ENCODE measurements at regions of chr5 and their contacts with region 1.

Region 1: DNA sequence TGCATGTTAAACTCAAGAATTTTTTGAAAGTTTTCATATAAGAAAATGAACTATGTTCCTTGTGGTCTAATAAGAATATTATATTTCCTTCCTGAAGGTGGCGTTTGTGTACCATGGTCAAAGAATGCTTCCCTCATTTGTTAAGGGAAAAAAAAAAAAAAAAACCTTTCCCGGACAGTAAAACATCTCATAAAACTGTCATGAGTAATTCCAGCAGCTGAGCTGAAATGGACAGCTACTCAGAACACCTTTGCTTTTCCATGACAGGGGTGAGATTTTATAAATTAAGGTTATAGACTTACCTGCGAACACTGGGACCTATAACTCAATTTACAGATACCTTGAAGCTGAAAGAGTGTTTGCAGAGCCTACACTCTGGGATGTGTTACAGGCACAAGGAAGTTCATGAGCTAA is 113.2 kb upstream of the RANBP3L start:
- DNase-seq: no peak
- H3K4me3 ChIP-seq: no peak overlapping the region
- H3K27me3 ChIP-seq: peaks cover 10% of the 10 kb centered on the region
- CTCF ChIP-seq: peak; percentile 46

Region 2: GRCh38 chr5:36507332-36507952 is 92.6 kb after region 1 on chr5:
- CTCF ChIA-PET with region 1: interaction called, 143 read pairs
- POLR2A ChIA-PET with region 1: interaction called, 3 read pairs
- DNase-seq: no peak
- H3K4me3 ChIP-seq: no peak overlapping the region
- H3K27me3 ChIP-seq: peaks cover 3% of the 10 kb centered on the region
- CTCF ChIP-seq: peak; percentile 91

Region 3: DNA sequence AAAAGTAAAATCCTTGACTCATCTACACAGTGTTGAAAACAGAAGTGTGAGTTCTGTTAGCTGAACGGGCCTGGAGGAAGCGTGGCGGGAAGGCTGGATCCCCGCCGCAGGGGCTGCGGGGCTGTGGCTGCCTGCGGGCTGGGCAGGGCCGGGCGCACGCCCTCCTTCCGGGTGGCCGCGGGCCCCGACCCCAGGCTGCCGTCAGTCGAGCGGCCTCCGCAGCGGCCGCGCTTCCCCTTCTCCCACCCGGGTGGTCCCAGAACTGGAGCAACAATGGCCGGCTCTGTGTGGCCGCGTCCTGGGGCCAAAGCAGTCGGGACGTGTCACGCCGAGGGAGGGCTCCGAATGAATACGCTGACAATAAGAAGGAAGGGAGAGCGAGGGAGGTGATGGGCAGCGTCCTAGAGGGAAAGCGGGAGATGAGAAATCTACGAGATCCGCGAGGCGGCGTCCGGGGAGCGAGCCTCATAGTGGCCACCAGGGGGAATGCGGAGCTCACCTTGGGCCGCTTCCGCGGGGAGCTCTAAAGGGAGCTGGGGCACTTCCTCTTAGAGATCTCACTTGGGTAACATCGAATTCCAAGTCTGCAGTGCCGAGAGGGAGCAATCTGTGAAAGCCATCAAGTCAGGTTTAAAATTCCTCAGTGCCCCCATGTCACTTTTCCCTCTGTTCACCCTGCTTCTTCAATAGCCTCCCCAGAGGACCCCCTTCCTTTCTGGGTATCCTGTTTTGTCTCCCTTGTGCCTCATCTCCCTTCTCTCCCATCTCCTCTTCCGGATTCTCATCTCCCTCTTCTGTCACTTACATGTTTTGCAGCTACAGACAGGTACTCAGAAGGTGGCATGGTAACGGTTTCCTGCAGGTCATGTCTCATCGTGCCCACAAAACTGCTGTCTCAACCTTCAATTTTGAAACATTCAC is 275.4 kb after region 1 on chr5:
- CTCF ChIA-PET with region 1: interaction called, 267 read pairs
- POLR2A ChIA-PET with region 1: no interaction called
- DNase-seq: no peak
- H3K4me3 ChIP-seq: peak overlapping the region; percentile 48
- H3K27me3 ChIP-seq: no peaks in the 10 kb centered on the region
- CTCF ChIP-seq: peak; percentile 96

Region 4: DNA sequence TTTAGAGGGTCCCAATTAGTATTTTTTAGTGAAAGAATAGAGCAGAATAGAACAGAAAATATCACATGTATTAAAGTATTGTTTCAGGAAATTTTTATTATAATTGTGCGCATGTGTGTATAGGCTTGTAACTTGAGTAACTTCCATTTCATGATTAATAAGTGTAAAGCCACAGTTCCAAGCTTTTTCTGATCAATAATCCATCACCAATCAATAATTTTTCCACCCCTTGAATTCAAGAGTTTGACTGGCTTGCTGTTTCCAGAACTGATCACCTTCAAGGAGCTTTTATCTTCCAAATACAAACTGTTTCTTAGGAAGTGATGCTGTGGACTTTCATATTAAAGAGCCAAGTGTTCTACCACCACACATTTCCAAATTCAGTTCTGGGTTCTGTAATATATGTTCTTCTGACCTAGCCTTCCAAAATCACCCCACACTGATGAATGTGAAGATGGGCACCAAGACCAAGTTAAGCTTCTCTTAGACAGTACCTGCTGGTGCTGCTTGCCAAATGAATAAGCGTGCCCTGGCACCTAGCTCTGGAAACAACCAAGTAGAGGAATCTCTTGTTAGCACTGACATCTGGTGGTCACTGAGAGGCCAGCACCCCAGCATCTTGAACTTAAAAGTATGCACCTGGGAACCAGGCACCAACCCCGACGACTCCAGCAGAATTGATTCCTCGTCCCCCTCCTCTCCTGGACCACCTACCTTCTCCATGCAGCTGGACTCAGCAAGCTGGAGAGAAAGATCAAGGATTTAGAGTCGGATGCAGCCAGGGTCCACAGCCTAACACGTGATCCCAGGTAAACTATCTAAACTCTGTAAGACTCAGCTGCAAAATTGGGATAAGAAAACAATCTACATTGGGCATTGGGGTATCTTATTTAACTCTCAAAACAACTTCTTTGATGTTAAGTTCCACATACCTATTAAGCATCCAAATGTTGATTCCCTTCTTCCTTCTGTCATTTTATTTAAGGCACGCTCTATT is 281.1 kb after region 1 on chr5:
- CTCF ChIA-PET with region 1: interaction called, 267 read pairs
- POLR2A ChIA-PET with region 1: no interaction called
- DNase-seq: no peak
- H3K4me3 ChIP-seq: no peak overlapping the region
- H3K27me3 ChIP-seq: peaks cover 4% of the 10 kb centered on the region; the same call in 1 of the 2 replicates
- CTCF ChIP-seq: peak; percentile 86

Region 5: DNA sequence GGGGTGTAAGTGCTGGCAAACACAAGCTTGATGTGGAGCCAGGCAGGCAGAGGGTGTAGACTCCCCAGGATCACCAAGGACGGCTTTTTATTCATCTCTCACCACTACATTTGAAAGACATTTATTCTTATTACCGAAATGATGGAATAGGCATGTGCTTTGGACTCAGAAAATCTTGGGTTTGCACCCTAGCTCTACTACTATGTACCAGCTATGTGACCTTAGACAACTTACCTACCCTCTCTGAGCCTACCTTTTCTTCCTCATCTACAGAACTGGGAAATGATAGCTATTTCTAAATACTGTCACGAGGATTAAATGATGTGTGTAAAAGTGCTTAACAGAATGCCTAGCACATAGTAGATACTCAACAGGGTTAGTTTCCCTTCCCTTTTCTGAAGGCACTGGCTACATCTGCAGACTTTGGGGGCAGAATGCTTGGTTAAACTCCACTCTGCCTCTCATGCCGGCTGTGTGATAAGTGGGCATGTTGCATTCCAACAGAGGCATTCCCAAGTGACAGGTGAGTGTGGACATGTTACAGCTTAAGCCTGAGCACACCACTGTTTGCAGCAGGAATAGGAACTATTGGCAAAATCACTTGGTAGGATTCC is 286.3 kb after region 1 on chr5:
- CTCF ChIA-PET with region 1: interaction called, 267 read pairs
- POLR2A ChIA-PET with region 1: no interaction called
- DNase-seq: no peak
- H3K4me3 ChIP-seq: no peak overlapping the region
- H3K27me3 ChIP-seq: peaks cover 9% of the 10 kb centered on the region
- CTCF ChIP-seq: no peak

Measured in BJ (cell line).